ENCODE measurements at regions of chr16 and their contacts with region 1.

Region 1: DNA sequence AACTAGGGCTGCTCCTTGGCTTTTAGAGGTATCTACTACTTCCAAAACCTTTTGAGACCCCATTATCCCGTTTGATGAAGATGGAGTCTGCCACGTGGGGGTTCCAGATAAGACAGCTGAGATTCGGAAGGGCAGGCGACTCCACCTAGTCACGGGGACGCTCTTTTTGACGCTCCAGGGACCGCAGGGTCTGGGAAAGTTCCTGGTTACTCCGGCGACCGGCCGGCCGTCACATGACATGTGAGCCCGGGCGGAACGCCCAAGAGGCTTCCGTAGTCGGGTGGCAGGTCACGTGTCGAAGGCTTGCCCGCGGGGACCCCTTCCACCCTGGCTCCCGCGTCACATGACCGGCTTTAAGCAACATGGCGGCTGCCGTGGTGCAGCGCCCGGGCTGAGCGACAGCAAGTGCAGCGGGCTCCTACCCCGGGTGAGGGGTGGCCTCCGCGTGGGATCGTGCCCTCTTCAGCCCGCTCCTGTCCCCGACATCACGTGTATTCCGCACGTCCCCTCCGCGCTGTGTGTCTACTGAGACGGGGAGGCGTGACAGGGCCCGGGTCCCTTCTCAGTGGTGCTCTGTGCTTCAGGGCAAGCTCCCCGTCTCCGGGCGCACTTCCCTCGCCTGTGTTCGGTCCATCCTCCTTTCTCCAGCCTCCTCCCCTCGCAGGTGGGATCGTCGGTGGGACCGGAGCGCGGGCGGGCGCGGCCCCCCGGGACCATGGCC is at the start of gene SPNS1:
- DNase-seq: peak; percentile 93 to 95
- H3K4me3 ChIP-seq: peak within 1 kb of the TSS; percentile 80 to 96 (median 87)
- H3K27ac ChIP-seq: peak within 1 kb of the TSS; percentile 55; the same call in 1 of the 2 replicates
- H3K4me1 ChIP-seq: peaks cover 0 to 7% (median 3%) of the 10 kb centered on the region in 4 experiments; a peak in 5 of 7 replicates
- H3K27me3 ChIP-seq: no peaks in the 10 kb centered on the region
- CTCF ChIP-seq: no peak
- EP300 ChIP-seq: 0 out of 3 replicates have a peak, but pooled peaks of 1 of the 2 experiments have one; percentile 69
- POLR2A ChIP-seq: peak in 1 of 2 experiments; percentile 82; a peak in 2 of 3 replicates
- RAD21 ChIP-seq: no peak
- total RNA-seq, gene SPNS1: 48.8 and 49.7 TPM in 2 replicates

Region 2: DNA sequence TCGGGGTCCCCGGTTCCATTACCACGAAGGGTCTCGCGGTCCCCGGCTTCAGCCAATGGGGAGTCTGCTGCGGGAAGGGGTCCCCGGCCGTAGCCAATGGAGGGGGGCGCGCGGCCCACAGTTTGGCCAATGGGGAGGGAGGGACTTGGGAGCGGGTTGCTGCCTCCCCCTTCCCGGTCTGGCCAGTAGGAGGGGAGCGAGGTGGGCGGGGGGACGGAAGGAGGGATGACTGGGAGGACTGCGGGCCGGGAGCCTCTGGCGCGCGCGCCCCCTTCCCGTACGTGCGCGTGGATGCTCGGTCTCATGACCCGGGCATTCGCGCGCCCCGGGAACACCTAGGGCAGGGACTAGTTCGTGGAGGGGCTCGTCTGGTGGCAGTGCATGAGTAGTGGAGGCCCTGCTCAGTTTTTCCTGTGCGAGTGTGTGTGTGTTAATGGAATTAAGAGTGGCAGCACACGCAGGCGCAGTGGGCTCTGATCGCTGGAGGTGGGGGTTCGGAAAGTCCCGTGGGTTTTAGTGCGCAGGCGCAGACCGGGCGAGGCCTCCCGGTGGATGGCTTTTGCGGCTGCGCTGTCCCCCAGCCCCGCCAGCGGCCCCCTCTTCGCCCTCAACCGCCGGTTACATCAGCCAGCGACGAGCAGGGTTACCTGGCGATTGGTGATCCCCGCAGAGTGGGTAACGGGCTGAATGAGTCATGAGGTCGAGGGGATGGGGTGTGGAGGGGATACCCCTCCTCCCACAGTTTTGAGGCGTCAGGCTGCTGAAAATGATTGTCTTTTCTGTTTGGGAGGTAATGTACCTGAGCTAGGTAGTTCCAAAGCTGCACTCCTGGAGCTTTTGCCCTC is 150.5 kb before region 1 on chr16:
- CTCF ChIA-PET with region 1: no interaction called
- POLR2A ChIA-PET with region 1: interaction called, 13 read pairs
- DNase-seq: peak; percentile 92 to 95
- H3K4me3 ChIP-seq: peak overlapping the region; percentile 88 to 97 (median 92)
- H3K27ac ChIP-seq: peak overlapping the region; percentile 96
- H3K4me1 ChIP-seq: peaks cover 0 to 3% (median under 1%) of the 10 kb centered on the region in 4 experiments; a peak in 3 of 7 replicates
- H3K27me3 ChIP-seq: no peaks in the 10 kb centered on the region
- CTCF ChIP-seq: no peak
- EP300 ChIP-seq: no peak
- POLR2A ChIP-seq: peak; percentile 24 to 82
- RAD21 ChIP-seq: no peak

Region 3: DNA sequence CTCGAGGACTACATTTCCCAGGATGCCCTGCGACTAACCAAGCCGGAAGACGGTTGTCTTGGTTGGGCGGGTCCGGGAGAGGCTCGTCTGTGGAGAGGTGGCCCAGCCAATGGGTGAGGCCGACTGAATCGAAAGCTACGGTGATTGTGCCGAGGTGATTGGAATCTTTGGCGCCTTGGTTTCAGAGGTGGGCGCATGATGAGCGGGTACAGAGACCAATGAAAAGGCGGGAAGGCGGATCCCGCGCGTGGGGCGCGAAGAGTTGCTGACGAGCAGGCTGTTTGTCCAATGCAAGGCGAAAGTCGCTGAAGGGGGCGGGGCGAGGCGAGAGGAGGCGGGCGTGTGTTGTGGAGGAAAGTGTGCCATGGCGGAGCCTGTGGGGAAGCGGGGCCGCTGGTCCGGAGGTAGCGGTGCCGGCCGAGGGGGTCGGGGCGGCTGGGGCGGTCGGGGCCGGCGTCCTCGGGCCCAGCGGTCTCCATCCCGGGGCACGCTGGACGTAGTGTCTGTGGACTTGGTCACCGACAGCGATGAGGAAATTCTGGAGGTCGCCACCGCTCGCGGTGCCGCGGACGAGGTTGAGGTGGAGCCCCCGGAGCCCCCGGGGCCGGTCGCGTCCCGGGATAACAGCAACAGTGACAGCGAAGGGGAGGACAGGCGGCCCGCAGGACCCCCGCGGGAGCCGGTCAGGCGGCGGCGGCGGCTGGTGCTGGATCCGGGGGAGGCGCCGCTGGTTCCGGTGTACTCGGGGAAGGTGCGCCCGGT is 23.8 kb before region 1 on chr16 and contains the start of gene NFATC2IP:
- CTCF ChIA-PET with region 1: interaction called, 18 read pairs
- POLR2A ChIA-PET with region 1: interaction called, 12 read pairs
- DNase-seq: peak; percentile 99
- H3K4me3 ChIP-seq: peak within 1 kb of the TSS; percentile 76 to 98 (median 77)
- H3K27ac ChIP-seq: no peak within 1 kb of the TSS; the same call in 1 of the 2 replicates
- H3K4me1 ChIP-seq: peaks cover 0 to 7% (median under 1%) of the 10 kb centered on the region in 4 experiments; a peak in 3 of 7 replicates
- H3K27me3 ChIP-seq: no peaks in the 10 kb centered on the region
- CTCF ChIP-seq: no peak
- EP300 ChIP-seq: no peak
- POLR2A ChIP-seq: peak in 1 of 2 experiments; percentile 47; a peak in 1 of 3 replicates
- RAD21 ChIP-seq: no peak
- total RNA-seq, gene NFATC2IP: 54.4 and 56.0 TPM in 2 replicates

Region 4: DNA sequence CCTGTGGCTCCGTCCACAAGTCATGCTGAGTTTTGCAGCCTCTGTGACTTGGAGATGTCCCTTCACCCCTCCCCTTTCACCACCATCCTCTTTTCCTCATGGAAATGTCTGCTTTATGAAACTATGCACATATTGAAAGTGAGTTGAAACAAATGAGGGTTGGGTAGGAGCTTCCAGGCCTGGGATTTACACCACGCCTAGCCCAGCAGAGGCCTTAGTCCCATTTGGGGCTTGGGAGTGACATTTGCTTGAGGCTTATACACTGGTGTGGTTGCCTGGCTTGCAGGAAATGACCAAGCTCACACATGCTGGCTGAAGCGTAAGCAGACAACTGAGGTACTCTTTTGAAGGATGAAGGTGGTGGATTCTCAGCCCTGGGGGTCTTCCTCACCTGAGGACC is 10.5 kb before region 1 on chr16:
- CTCF ChIA-PET with region 1: interaction called, 14 read pairs
- POLR2A ChIA-PET with region 1: interaction called, 19 read pairs
- DNase-seq: no peak
- H3K4me3 ChIP-seq: no peak overlapping the region
- H3K27ac ChIP-seq: no peak overlapping the region
- H3K4me1 ChIP-seq: no peaks in the 10 kb centered on the region
- H3K27me3 ChIP-seq: no peaks in the 10 kb centered on the region
- CTCF ChIP-seq: no peak
- EP300 ChIP-seq: no peak
- POLR2A ChIP-seq: no peak
- RAD21 ChIP-seq: no peak

Region 5: GRCh38 chr16:28990375-28991040 is 15.9 kb after region 1 on chr16:
- CTCF ChIA-PET with region 1: interaction called, 25 read pairs
- POLR2A ChIA-PET with region 1: interaction called, 8 read pairs
- DNase-seq: no peak
- H3K4me3 ChIP-seq: no peak overlapping the region
- H3K27ac ChIP-seq: no peak overlapping the region
- H3K4me1 ChIP-seq: no peaks in the 10 kb centered on the region
- H3K27me3 ChIP-seq: no peaks in the 10 kb centered on the region
- CTCF ChIP-seq: no peak
- EP300 ChIP-seq: no peak
- POLR2A ChIP-seq: no peak
- RAD21 ChIP-seq: no peak

Region 6: GRCh38 chr16:29029168-29029994 is 54.8 kb after region 1 on chr16:
- CTCF ChIA-PET with region 1: interaction called, 10 read pairs
- POLR2A ChIA-PET with region 1: interaction called, 6 read pairs
- DNase-seq: peak; percentile 23 to 58
- H3K4me3 ChIP-seq: peak overlapping the region in 1 of 4 experiments; percentile 11; a peak in 1 of 8 replicates
- H3K27ac ChIP-seq: no peak overlapping the region
- H3K4me1 ChIP-seq: peaks cover 0 to 10% (median 5%) of the 10 kb centered on the region in 4 experiments; a peak in 6 of 7 replicates
- H3K27me3 ChIP-seq: no peaks in the 10 kb centered on the region
- CTCF ChIP-seq: no peak
- EP300 ChIP-seq: no peak
- POLR2A ChIP-seq: no peak
- RAD21 ChIP-seq: no peak